GM12878 (cell line): ENCODE measurements at regions of chr11 and their contacts with region 1.

Region 1: DNA sequence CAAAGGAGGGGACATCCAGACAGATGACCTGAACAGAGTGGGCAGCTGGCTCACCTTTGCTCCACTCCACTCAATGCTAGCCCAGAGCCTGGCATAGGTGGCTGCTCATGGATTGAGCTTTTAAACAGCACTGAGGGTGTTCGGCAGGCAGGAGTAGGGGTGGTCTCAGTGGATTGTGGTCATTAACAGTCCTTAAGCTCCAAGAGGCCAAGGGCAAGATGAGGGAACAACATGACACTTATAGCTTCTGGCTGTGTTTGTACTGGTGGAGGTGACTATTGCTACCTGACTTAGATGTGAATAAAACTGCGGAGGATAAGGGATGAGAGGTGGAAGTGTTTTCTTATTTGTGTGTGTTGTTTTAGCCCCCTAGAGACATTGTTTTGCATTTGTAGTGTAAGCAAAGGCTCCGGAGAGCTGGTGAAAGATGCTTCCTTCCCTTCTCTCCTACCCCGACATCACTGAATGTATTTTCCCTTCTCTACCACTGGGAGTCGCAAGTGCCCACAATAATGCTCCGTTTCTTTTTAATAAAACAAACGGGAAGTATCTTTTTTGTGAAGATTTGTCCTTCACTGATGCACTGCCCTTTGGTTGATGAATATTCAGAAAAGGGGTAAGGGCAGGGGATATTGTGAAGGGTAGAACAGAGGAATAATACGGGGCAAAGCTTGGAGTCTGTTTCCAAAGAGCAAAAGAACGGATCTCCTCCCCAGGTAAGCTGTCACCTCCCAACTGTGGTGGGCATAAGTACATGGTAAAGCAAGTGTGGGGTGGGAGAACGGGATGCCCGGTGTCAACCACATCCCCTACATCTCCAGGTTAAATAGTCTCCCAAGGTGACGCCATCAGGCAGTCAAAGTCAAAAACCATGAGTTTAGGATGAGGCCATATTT is 27.5 kb upstream of the MTNR1B start:
- DNase-seq: no peak
- ATAC-seq: peak; percentile 80
- H3K4me3 ChIP-seq: no peak overlapping the region
- H3K27ac ChIP-seq: no peak overlapping the region
- H3K4me1 ChIP-seq: no peaks in the 10 kb centered on the region
- H3K27me3 ChIP-seq: no peaks in the 10 kb centered on the region; a peak in 1 of 4 replicates
- CTCF ChIP-seq: peak; percentile 58 to 76 (median 73); a peak in 5 of 6 replicates
- EP300 ChIP-seq: no peak
- POLR2A ChIP-seq: no peak
- RAD21 ChIP-seq: peak; percentile 83

Region 2: DNA sequence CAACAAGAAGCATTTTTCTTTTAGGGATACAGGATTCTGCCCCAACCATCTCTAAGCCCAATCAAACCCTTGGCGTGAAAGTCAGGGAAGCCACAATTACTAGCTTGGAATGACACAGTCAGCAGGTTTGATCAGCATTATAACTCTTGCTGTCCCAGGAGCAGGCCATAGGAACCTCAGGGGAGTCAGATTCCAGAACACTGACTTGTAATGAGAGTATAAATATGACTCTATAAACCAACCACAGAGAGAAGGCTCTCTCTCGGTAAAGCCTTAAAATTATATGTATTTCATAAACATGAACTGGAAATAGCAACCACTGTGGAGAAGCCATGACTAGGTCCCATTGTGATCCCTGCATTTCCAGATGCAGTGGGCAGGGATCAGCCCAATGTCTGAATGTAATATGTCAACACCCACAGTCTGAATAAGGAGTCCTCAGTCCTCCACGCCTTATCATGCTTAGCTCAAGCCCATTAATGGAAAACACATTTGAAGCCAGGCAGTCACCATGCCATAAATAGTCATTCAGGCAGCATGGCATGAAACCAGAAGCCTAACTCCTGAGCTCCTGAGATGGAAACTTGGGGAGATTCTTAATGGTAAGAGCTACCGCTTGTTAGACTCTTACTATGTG is 71.6 kb before region 1 on chr11:
- CTCF ChIA-PET with region 1: no interaction called
- POLR2A ChIA-PET with region 1: no interaction called
- RAD21 ChIA-PET with region 1: no interaction called
- SMC1A ChIA-PET with region 1: no interaction called
- in situ Hi-C with region 1: no loop called
- intact Hi-C with region 1: no loop called
- DNase-seq: no peak
- ATAC-seq: no peak
- H3K4me3 ChIP-seq: no peak overlapping the region
- H3K27ac ChIP-seq: no peak overlapping the region
- H3K4me1 ChIP-seq: no peaks in the 10 kb centered on the region
- H3K27me3 ChIP-seq: no peaks in the 10 kb centered on the region; a peak in 1 of 4 replicates
- CTCF ChIP-seq: no peak
- EP300 ChIP-seq: no peak
- POLR2A ChIP-seq: no peak
- RAD21 ChIP-seq: no peak

Region 3: GRCh38 chr11:92920331-92920730 is 21.6 kb before region 1 on chr11:
- CTCF ChIA-PET with region 1: no interaction called
- POLR2A ChIA-PET with region 1: no interaction called
- RAD21 ChIA-PET with region 1: no interaction called
- SMC1A ChIA-PET with region 1: no interaction called
- in situ Hi-C with region 1: no loop called
- intact Hi-C with region 1: no loop called
- DNase-seq: no peak
- ATAC-seq: no peak
- H3K4me3 ChIP-seq: no peak overlapping the region
- H3K27ac ChIP-seq: no peak overlapping the region
- H3K4me1 ChIP-seq: no peaks in the 10 kb centered on the region
- H3K27me3 ChIP-seq: no peaks in the 10 kb centered on the region
- CTCF ChIP-seq: no peak
- EP300 ChIP-seq: no peak
- POLR2A ChIP-seq: no peak
- RAD21 ChIP-seq: no peak

Region 4: DNA sequence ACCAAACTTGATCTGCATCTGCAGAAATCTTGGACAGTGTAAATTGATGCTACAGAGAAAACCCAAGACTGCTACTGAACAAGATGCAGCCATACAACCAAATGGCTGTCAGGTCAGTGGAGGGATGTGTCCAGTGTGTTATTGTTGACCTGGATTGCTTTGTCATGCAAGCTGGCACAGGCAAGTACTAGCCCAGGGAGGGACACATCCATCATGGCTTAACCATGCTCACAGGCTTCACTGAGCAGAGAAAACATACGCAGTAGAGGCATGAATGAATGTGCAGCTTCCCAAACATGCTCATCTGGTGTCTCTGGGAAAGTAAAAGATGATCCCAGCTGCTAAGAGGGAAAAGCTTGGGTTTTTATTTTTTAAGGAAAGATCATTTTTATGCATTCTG is 121.2 kb after region 1 on chr11:
- CTCF ChIA-PET with region 1: interaction called, 18 read pairs
- POLR2A ChIA-PET with region 1: no interaction called
- RAD21 ChIA-PET with region 1: no interaction called
- SMC1A ChIA-PET with region 1: interaction called, 3 read pairs
- in situ Hi-C with region 1: no loop called
- intact Hi-C with region 1: loop called (anchors 1 kb)
- DNase-seq: no peak
- ATAC-seq: no peak
- H3K4me3 ChIP-seq: no peak overlapping the region
- H3K27ac ChIP-seq: no peak overlapping the region
- H3K4me1 ChIP-seq: no peaks in the 10 kb centered on the region
- H3K27me3 ChIP-seq: no peaks in the 10 kb centered on the region
- CTCF ChIP-seq: no peak
- EP300 ChIP-seq: no peak
- POLR2A ChIP-seq: no peak
- RAD21 ChIP-seq: no peak

Region 5: GRCh38 chr11:93169950-93170561 is 228.1 kb after region 1 on chr11:
- CTCF ChIA-PET with region 1: interaction called, 6 read pairs
- POLR2A ChIA-PET with region 1: no interaction called
- RAD21 ChIA-PET with region 1: interaction called, 4 read pairs
- SMC1A ChIA-PET with region 1: interaction called, 12 read pairs
- in situ Hi-C with region 1: no loop called
- intact Hi-C with region 1: loop called (anchors 1 kb)
- DNase-seq: no peak
- ATAC-seq: peak; percentile 61; the same call in 2 of the 3 replicates
- H3K4me3 ChIP-seq: no peak overlapping the region
- H3K27ac ChIP-seq: no peak overlapping the region
- H3K4me1 ChIP-seq: no peaks in the 10 kb centered on the region
- H3K27me3 ChIP-seq: no peaks in the 10 kb centered on the region
- CTCF ChIP-seq: peak in 2 of 3 experiments; percentile 36; a peak in 4 of 6 replicates
- EP300 ChIP-seq: no peak
- POLR2A ChIP-seq: no peak
- RAD21 ChIP-seq: peak; percentile 40; the same call in 1 of the 2 replicates

Region 6: DNA sequence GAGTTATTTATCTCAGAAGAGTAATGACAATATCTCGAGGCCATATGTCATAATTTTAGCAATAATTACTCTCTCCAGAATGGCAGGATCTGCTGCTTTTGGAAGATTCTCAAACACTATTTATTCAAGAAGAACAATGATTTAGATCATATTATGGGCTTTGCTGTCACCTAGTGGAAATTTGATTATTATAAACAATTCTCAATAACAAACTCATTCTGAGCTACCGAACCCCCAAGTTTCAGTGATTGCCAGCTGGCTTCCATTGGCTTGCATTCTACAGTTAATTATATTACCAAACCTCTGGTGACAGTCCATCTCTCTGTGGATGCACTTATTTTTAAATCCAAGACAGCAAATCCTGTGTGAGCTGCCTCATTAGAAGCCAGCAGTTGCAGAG is 283.7 kb after region 1 on chr11:
- CTCF ChIA-PET with region 1: interaction called, 31 read pairs
- POLR2A ChIA-PET with region 1: no interaction called
- RAD21 ChIA-PET with region 1: interaction called, 18 read pairs
- SMC1A ChIA-PET with region 1: interaction called, 6 read pairs
- in situ Hi-C with region 1: loop called (anchors 5 kb)
- intact Hi-C with region 1: loop called (anchors 1 kb)
- DNase-seq: no peak
- ATAC-seq: 0 out of 3 replicates have a peak, but pooled peaks have one; percentile 23
- H3K4me3 ChIP-seq: no peak overlapping the region
- H3K27ac ChIP-seq: no peak overlapping the region
- H3K4me1 ChIP-seq: no peaks in the 10 kb centered on the region
- H3K27me3 ChIP-seq: no peaks in the 10 kb centered on the region
- CTCF ChIP-seq: peak in 2 of 3 experiments; percentile 23 to 55; a peak in 3 of 6 replicates
- EP300 ChIP-seq: no peak
- POLR2A ChIP-seq: no peak
- RAD21 ChIP-seq: peak; percentile 41; the same call in 1 of the 2 replicates